Cardiac septum (tissue), 1 donor: ENCODE measurements at regions of chr1 and their contacts with region 1.

Region 1: DNA sequence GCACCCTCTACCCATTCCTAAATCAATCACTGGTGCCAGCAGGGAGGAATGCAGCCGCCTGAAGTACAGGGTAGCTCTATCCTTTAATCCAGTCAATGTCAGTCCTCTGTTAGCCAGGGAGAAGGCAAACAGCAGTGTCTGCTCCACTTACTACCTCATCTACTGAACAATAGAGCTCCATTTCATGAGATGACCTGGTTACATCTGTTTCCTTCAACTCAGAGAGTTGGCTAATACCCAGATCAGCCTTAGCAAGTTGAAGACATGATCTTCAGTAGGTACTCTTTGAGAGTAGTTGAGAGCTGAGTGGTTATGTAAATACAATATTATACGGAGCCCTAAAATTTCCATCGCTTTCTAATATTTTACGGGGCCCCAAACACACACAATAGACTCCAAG is 46.1 kb upstream of the CD34 start:
- DNase-seq: no peak

Region 2: GRCh38 chr1:207941665-207942064 is 15.3 kb before region 1 on chr1:
- intact Hi-C with region 1: loop called (anchors 2 kb)
- DNase-seq: peak; percentile 88

Region 3: GRCh38 chr1:208036109-208036808 is 79.3 kb after region 1 on chr1:
- intact Hi-C with region 1: no loop called
- DNase-seq: no peak